Pancreas (tissue), 10 donors: ENCODE measurements at regions of chr5 and their contacts with region 1.

Region 1: GRCh38 chr5:150129813-150130492 is 25.7 kb downstream of the PDGFRB start:
- DNase-seq: peak; percentile 56 to 85 (median 76)
- ATAC-seq: peak; percentile 91 to 95 (median 93)
- H3K4me3 ChIP-seq: peak overlapping the region in 2 of 4 donors; percentile 4 to 11
- H3K27ac ChIP-seq: no peak overlapping the region
- H3K4me1 ChIP-seq: no peaks in the 10 kb centered on the region
- H3K27me3 ChIP-seq: no peaks in the 10 kb centered on the region
- CTCF ChIP-seq: peak; percentile 82 to 91 (median 86)

Region 2: DNA sequence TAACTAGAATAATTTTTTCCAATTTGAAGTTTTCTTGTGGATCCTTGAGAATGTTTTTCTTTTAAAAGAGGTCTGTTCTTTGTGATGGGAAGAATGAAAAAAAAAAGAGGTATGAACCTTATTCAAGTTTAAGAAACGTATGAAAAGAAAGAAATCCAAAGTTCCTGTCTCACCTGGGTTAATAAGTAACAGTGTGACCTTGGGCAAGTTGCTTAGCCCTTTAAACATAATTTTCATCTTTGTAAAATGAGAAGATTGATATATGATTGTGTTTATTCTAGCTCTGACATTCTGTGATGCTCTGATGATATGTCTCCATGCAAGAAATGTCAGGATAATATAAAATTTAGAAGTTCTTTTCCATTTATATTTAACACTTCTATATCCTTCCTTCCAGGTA is 150.1 kb before region 1 on chr5:
- intact Hi-C with region 1: no loop called
- DNase-seq: no peak
- ATAC-seq: peak; percentile 50 to 90 (median 76)
- H3K4me3 ChIP-seq: no peak overlapping the region
- H3K27ac ChIP-seq: peak overlapping the region in 1 of 4 donors; percentile 40
- H3K4me1 ChIP-seq: peaks cover 7 to 11% (median 10%) of the 10 kb centered on the region in 3 donors
- H3K27me3 ChIP-seq: no peaks in the 10 kb centered on the region
- CTCF ChIP-seq: no peak

Region 3: GRCh38 chr5:150217873-150218692 is 88.1 kb after region 1 on chr5:
- intact Hi-C with region 1: loop called in 1 of 3 experiments (anchors 10 kb)
- DNase-seq: peak; percentile 65 to 89 (median 85)
- ATAC-seq: peak; percentile 91 to 97 (median 93)
- H3K4me3 ChIP-seq: no peak overlapping the region
- H3K27ac ChIP-seq: no peak overlapping the region
- H3K4me1 ChIP-seq: no peaks in the 10 kb centered on the region
- H3K27me3 ChIP-seq: no peaks in the 10 kb centered on the region
- CTCF ChIP-seq: peak; percentile 82 to 94 (median 88)

Region 4: DNA sequence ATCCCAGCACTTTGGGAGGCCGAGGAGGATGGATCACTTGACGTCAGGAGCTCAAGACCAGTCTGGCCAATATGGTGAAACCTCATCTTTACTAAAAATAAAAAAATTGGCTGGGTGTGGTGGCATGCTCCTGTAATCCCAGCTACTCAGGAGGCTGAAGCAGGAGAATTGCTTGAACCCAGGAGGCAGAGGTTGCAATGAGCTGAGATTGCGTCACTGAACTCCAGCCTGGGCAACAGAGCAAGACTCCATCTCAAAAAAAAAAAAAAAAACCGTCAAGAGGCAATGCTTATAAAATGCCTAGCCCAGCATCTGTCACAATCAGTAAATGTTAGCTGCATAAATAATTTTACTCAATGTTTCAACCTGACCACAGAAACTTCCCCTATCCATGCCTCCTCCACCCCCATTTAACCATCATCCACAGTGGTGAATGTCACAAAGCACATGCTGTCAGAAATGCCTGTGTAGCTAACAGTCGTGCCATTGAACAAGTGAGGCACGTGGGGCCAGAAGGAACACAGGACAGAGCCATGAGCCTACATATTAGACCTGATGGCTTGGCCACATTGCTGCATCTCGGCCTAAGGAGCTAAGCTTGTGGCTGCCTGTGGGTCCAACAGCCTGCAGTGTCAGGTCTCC is 210.8 kb after region 1 on chr5:
- intact Hi-C with region 1: loop called in 1 of 3 experiments (anchors 10 kb)
- DNase-seq: no peak
- ATAC-seq: no peak
- H3K4me3 ChIP-seq: no peak overlapping the region
- H3K27ac ChIP-seq: no peak overlapping the region
- H3K4me1 ChIP-seq: no peaks in the 10 kb centered on the region
- H3K27me3 ChIP-seq: no peaks in the 10 kb centered on the region
- CTCF ChIP-seq: no peak

Region 5: DNA sequence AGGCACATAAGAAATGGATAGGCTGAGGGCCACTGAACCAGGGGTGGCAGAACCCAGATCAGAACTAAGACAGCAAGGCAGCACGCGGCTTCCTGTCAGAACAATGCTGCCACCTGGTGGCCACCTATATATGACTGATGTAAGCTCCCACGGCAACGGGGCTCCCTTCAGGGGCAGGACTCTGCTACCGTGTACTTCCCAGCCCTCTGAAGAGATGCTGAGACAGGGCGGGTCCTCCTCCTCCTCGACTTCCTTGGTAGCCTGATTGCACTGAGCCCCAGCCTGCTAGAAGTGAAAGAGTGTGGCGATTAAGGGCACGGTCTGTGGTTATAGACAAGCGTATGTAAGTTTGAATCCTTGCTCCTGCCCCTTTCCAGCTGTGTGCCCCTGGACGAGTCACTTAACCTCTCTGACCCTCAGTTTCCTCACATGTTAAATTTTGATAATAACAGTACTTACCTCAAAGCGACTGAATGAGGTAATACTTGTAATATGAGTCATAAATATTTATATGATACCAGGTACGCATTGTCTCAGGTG is 306.3 kb after region 1 on chr5:
- intact Hi-C with region 1: loop called in 1 of 3 experiments (anchors 10 kb)
- DNase-seq: peak; percentile 72 to 93 (median 86)
- ATAC-seq: peak; percentile 88 to 97 (median 95)
- H3K4me3 ChIP-seq: no peak overlapping the region
- H3K27ac ChIP-seq: no peak overlapping the region
- H3K4me1 ChIP-seq: no peaks in the 10 kb centered on the region
- H3K27me3 ChIP-seq: no peaks in the 10 kb centered on the region
- CTCF ChIP-seq: peak; percentile 76 to 88 (median 82)

Region 6: GRCh38 chr5:150449517-150450339 is 319.8 kb after region 1 on chr5 and contains the start of gene RPS14:
- intact Hi-C with region 1: no loop called
- DNase-seq: peak; percentile 91 to 96 (median 94)
- ATAC-seq: peak; percentile 96 to 99 (median 98)
- H3K4me3 ChIP-seq: peak within 1 kb of the TSS; percentile 57 to 70 (median 69)
- H3K27ac ChIP-seq: peak within 1 kb of the TSS; percentile 92 to 98 (median 96)
- H3K4me1 ChIP-seq: peaks cover 7 to 17% (median 8%) of the 10 kb centered on the region in 3 donors
- H3K27me3 ChIP-seq: no peaks in the 10 kb centered on the region
- CTCF ChIP-seq: peak; percentile 84 to 86 (median 85)
- total RNA-seq, gene RPS14: 1,164 to 1,840 (median 1,380) TPM